Right lobe of liver (tissue), 6 donors: ENCODE measurements at regions of chr22 and their contacts with region 1.

Region 1: DNA sequence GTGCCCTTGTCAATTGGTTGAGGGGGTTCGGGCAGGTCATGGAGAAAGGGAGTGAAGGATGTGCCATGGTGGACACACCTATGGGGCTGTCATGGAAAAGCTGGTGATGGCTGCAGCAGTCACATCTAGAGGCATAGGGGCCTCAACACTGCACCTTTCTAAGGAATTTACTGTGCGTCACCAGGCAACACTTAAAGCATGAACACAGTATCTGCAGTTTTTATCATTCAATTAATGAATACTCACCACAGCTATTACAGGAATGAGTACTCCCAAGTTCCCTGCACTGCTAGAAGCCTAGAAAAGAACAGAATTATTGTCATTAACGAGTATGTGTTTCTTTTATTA is 19.0 kb downstream of the SERPIND1 start:
- DNase-seq: no peak
- ATAC-seq: no peak
- H3K4me3 ChIP-seq: no peak overlapping the region
- H3K27ac ChIP-seq: no peak overlapping the region
- H3K4me1 ChIP-seq: peaks cover 0 to 49% (median 17%) of the 10 kb centered on the region in 4 donors
- H3K27me3 ChIP-seq: no peaks in the 10 kb centered on the region
- CTCF ChIP-seq: no peak
- POLR2A ChIP-seq: no peak

Region 2: GRCh38 chr22:20602434-20603164 is 190.3 kb before region 1 on chr22:
- intact Hi-C with region 1: no loop called
- DNase-seq: no peak
- ATAC-seq: no peak
- H3K4me3 ChIP-seq: no peak overlapping the region
- H3K27ac ChIP-seq: no peak overlapping the region
- H3K4me1 ChIP-seq: peaks cover 0 to 3% (median 0%) of the 10 kb centered on the region in 4 donors
- H3K27me3 ChIP-seq: no peaks in the 10 kb centered on the region
- CTCF ChIP-seq: no peak
- POLR2A ChIP-seq: no peak

Region 3: GRCh38 chr22:20873214-20873613 is 80.3 kb after region 1 on chr22:
- intact Hi-C with region 1: loop called in 1 of 2 experiments (anchors 10 kb)
- DNase-seq: no peak
- ATAC-seq: no peak
- H3K4me3 ChIP-seq: no peak overlapping the region
- H3K27ac ChIP-seq: no peak overlapping the region
- H3K4me1 ChIP-seq: peaks cover 0 to 16% (median 3%) of the 10 kb centered on the region in 4 donors
- H3K27me3 ChIP-seq: no peaks in the 10 kb centered on the region
- CTCF ChIP-seq: no peak
- POLR2A ChIP-seq: no peak

Region 4: DNA sequence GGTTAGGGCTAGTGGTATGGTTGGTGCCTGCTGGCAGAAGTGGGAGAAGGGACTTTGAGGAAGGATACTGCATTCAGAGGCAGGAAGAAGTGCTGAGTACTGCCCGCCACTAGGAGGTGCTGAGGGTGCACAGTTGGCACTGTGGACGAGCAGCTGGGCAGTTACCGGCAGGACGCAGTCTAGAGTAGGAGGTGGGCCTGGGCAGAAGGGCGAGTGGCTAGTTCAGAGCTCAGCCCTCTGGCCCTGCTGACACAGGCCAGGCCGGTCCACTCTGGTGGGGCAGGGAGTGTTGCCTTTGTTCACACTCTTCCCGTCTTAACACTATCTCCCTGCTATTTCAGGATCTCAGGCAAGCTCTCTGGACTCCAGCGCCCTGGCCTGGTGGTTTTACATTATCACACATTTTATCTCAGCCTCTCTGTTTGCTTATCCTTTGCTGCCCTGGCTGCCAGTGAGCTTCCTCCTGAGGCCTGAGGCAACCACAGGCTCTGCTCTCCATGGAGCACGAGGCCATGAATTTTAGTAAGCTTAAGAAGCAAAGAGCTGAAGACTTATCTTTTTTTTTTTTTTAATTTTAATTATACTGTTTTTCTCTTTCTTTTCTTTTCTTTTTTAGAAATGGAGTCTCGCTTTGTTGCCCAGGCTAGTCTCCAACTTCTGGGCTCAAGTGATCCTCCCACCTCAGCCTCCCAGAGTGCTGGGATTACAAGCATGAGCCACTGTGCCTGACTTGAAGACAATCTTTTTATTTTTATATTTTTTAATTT is 92.8 kb after region 1 on chr22:
- intact Hi-C with region 1: loop called in 1 of 2 experiments (anchors 10 kb)
- DNase-seq: peak; percentile 88 to 93 (median 91)
- ATAC-seq: peak; percentile 87 to 95 (median 89)
- H3K4me3 ChIP-seq: no peak overlapping the region
- H3K27ac ChIP-seq: peak overlapping the region; percentile 44 to 79 (median 48)
- H3K4me1 ChIP-seq: peaks cover 0 to 57% (median 30%) of the 10 kb centered on the region in 4 donors
- H3K27me3 ChIP-seq: no peaks in the 10 kb centered on the region
- CTCF ChIP-seq: peak; percentile 81 to 95 (median 90)
- POLR2A ChIP-seq: peak; percentile 38